OCI-LY7 (cell line): ENCODE measurements at regions of chr17 and their contacts with region 1.

Region 1: GRCh38 chr17:50478391-50479381 is at the start of gene RSAD1:
- DNase-seq: peak; percentile 96
- H3K4me3 ChIP-seq: peak within 1 kb of the TSS; percentile 93
- H3K27ac ChIP-seq: peak within 1 kb of the TSS; percentile 70
- H3K4me1 ChIP-seq: peaks cover 16% of the 10 kb centered on the region
- CTCF ChIP-seq: peak; percentile 87
- total RNA-seq, gene RSAD1: 22.6 and 25.0 TPM in 2 replicates

Region 2: DNA sequence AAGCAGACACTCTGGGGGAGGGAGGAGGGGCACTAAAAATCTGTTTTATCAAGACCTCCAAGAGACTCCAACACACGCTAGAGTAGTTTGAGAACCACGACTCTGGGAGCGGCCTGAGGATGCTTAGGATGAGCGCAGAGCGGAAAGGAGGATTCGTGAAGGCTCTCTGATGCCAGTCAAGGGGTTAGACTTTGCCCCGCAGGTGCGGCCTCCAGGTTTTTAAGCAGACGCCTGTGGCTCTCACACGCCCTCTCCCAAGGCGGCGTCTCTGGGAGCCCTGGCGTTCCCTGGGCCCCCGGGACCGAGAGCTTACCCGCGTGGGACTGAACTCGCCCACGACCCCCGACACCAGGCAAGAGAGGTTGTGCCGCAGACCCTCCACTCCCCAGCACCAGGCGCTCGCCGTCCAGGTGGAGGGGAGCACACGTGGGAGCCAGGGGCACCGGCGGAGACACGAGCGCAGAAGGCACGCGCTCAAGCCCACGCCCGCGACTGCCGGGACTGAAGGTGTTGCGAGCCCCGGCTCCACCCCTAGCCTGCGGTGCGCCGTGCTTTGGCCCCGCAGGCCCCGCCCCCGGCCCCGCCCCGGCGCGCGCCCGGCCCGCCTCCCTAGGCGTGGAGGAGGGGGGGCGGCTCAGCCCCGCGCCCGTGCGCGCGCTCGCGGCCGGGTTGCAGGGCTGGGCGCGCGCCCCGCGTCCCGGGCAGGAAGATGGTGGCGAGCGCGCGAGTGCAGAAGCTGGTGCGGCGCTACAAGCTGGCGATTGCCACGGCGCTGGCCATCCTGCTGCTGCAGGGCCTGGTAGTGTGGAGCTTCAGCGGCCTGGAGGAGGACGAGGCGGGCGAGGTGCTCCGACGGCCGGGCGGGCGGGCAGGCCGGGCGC is 133.0 kb before region 1 on chr17 and contains the start of gene XYLT2:
- CTCF ChIA-PET with region 1: no interaction called
- POLR2A ChIA-PET with region 1: no interaction called
- intact Hi-C with region 1: loop called (anchors 5 kb)
- DNase-seq: peak; percentile 94
- H3K4me3 ChIP-seq: peak within 1 kb of the TSS; percentile 82
- H3K27ac ChIP-seq: no peak within 1 kb of the TSS
- H3K4me1 ChIP-seq: peaks cover 16% of the 10 kb centered on the region
- CTCF ChIP-seq: no peak
- total RNA-seq, gene XYLT2: 22.4 and 22.5 TPM in 2 replicates

Region 3: DNA sequence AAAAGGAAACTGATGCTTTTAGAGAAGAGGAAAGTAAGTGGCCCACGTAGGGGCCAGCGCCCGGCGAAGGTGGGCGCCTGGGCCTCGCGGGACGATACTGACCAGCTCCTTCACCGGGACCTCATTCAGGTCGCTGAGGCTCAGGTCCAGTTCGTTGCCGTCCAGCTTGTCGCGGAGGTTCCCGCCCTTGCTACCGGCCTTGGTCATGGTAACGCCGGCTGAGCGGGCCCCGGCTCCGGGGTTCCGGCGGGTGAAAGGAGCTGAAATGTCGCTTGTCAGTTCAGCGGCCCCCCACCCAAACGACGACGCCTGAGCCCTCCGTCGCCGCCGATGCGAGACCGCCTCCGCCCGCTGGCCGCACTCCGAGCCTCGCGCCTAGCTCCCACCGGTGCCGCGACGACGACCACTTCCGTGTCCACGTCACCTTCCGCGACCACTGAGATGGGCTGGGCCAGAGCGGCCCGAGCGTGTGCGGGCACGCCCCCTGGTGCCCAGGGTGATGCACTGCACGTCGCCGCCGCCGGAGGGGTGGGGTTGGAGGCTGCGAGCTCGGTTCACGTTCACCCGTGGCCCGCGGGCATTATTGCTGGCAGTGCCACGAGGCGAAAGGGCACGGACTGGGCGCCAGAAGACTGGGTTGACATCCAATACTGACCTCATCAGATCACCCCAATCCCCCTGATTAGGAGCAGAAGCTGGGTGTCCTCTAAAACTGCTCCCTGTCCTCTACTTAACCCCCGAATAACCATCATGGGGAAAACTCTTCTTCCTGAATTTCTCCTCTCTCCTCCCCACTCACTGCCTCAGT is 81.4 kb before region 1 on chr17 and contains the start of gene LRRC59:
- CTCF ChIA-PET with region 1: interaction called, 7 read pairs
- POLR2A ChIA-PET with region 1: interaction called, 4 read pairs
- intact Hi-C with region 1: loop called (anchors 2 kb)
- DNase-seq: peak; percentile 90
- H3K4me3 ChIP-seq: peak within 1 kb of the TSS; percentile 84
- H3K27ac ChIP-seq: peak within 1 kb of the TSS; percentile 4
- H3K4me1 ChIP-seq: peaks cover 24% of the 10 kb centered on the region
- CTCF ChIP-seq: peak; percentile 82
- total RNA-seq, gene LRRC59: 81.9 and 87.4 TPM in 2 replicates

Region 4: GRCh38 chr17:50495918-50496317 is 17.2 kb after region 1 on chr17:
- CTCF ChIA-PET with region 1: no interaction called
- POLR2A ChIA-PET with region 1: interaction called, 3 read pairs
- intact Hi-C with region 1: loop called (anchors 2 kb)
- DNase-seq: no peak
- H3K4me3 ChIP-seq: no peak overlapping the region
- H3K27ac ChIP-seq: no peak overlapping the region
- H3K4me1 ChIP-seq: no peaks in the 10 kb centered on the region
- CTCF ChIP-seq: no peak

Region 5: GRCh38 chr17:50534222-50534978 is 55.7 kb after region 1 on chr17:
- CTCF ChIA-PET with region 1: no interaction called
- POLR2A ChIA-PET with region 1: no interaction called
- intact Hi-C with region 1: no loop called
- DNase-seq: no peak
- H3K4me3 ChIP-seq: no peak overlapping the region
- H3K27ac ChIP-seq: no peak overlapping the region
- H3K4me1 ChIP-seq: no peaks in the 10 kb centered on the region
- CTCF ChIP-seq: no peak

Region 6: DNA sequence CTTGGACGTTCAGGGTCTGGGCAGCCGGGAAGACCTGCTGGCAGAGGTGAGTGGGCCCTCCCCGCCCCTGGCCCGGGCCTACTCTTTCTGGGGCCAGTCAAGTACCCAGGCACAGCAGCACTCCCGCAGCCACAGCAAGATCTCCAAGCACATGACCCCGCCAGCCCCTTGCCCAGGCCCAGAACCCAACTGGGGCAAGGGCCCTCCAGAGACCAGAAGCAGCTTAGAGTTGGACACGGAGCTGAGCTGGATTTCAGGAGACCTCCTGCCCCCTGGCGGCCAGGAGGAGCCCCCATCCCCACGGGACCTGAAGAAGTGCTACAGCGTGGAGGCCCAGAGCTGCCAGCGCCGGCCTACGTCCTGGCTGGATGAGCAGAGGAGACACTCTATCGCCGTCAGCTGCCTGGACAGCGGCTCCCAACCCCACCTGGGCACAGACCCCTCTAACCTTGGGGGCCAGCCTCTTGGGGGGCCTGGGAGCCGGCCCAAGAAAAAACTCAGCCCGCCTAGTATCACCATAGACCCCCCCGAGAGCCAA is 147.4 kb after region 1 on chr17:
- CTCF ChIA-PET with region 1: interaction called, 3 read pairs
- POLR2A ChIA-PET with region 1: interaction called, 6 read pairs
- intact Hi-C with region 1: loop called (anchors 2 kb)
- DNase-seq: peak; percentile 76
- H3K4me3 ChIP-seq: no peak overlapping the region
- H3K27ac ChIP-seq: no peak overlapping the region
- H3K4me1 ChIP-seq: no peaks in the 10 kb centered on the region
- CTCF ChIP-seq: peak; percentile 82